ENCODE measurements at regions of chr2 and their contacts with region 1.

Region 1: GRCh38 chr2:27582695-27583389 is at the start of gene ZNF512:
- DNase-seq: peak; percentile 64
- H3K4me3 ChIP-seq: peak within 1 kb of the TSS; percentile 44 to 49
- H3K27ac ChIP-seq: peak within 1 kb of the TSS; percentile 38 to 57
- H3K4me1 ChIP-seq: peaks cover 3% of the 10 kb centered on the region
- H3K27me3 ChIP-seq: no peaks in the 10 kb centered on the region
- CTCF ChIP-seq: peak in 1 of 4 experiments; percentile 10
- POLR2A ChIP-seq: peak; percentile 35
- total RNA-seq, gene ZNF512: 31.4 to 55.6 TPM

Region 2: GRCh38 chr2:25991965-25992364 is 1590.9 kb before region 1 on chr2:
- intact Hi-C with region 1: no loop called
- DNase-seq: no peak
- H3K4me3 ChIP-seq: no peak overlapping the region
- H3K27ac ChIP-seq: no peak overlapping the region
- H3K4me1 ChIP-seq: no peaks in the 10 kb centered on the region
- H3K27me3 ChIP-seq: no peaks in the 10 kb centered on the region
- CTCF ChIP-seq: no peak
- POLR2A ChIP-seq: no peak

Region 3: DNA sequence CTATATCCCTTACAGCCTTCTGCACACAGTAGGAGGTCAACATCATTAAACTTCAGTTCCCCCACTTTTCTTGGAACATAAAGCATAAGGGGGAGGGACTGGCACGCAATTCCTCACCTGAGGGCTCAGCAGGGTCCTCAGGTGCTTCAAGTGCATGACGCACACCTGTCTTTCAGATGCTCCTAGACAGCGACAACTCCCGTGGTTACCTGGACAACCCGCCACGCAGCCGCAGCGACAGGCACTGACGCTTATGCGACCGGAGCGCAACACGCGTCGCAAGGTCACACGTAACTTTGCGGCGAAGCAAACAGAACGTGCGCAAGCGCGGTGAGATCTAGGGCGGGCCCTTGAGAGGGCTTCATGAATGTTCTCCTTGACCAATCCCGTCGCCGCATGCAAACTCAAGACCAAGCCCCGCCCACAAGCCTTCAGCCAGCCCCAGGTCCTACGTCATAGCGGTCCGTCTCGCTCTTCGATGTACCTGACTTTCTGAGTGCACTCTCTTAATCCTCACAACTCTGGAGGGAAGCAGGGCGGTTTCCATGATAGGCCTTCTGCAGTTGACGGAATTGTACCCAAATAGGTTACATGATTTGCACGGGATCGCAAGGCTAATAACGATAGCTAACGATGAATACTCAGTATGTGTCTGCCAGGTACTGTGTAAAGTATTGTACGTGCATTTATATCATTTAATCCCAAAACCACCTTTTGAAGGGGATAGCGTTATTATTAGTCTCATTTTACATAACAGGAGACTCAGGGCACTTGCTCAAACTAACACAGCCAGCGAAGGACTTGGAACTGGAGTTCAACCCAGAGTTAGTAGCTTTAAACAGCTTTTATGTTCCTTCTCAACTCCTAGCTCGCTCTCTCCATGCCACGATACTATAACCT is 93.1 kb before region 1 on chr2 and contains the start of gene IFT172:
- intact Hi-C with region 1: loop called (anchors 5 kb)
- DNase-seq: peak; percentile 100
- H3K4me3 ChIP-seq: peak within 1 kb of the TSS; percentile 27 to 45
- H3K27ac ChIP-seq: peak within 1 kb of the TSS; percentile 66 to 80
- H3K4me1 ChIP-seq: no peaks in the 10 kb centered on the region
- H3K27me3 ChIP-seq: no peaks in the 10 kb centered on the region
- CTCF ChIP-seq: peak in 1 of 4 experiments; percentile 3
- POLR2A ChIP-seq: peak; percentile 83
- total RNA-seq, gene IFT172: 32.6 to 42.8 TPM

Measured in prostate gland (tissue), 2 donors.